ENCODE measurements at regions of chr7 and their contacts with region 1.

Region 1: DNA sequence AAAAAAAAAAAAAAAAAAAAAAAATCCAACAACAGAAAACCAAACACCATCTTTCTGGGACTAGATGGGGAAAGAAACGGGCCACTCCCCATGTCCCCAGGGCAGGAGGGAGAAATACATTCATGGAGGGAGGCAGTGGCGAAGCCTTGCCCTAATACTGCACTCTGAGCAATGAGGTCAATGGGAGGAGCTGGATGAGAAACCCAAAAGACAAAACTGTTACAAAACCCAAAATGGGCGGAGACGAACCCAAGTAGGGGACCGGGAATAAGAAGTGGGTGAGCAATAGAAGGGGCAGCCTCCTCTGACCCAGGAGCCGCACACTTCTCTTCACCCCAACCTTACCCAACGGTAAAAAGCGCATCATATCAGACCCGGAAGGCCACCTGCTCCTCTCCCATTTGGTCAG is 6.6 kb downstream of the GNB2 start:
- DNase-seq: no peak
- ATAC-seq: peak; percentile 2
- H3K4me3 ChIP-seq: no peak overlapping the region
- H3K27ac ChIP-seq: no peak overlapping the region
- H3K4me1 ChIP-seq: peaks cover 8% of the 10 kb centered on the region
- H3K27me3 ChIP-seq: no peaks in the 10 kb centered on the region
- CTCF ChIP-seq: no peak

Region 2: GRCh38 chr7:100478966-100479665 is 201.1 kb before region 1 on chr7 and contains the start of gene TSC22D4:
- intact Hi-C with region 1: loop called (anchors 10 kb)
- DNase-seq: peak; percentile 96
- ATAC-seq: peak; percentile 92
- H3K4me3 ChIP-seq: peak within 1 kb of the TSS; percentile 88
- H3K27ac ChIP-seq: peak within 1 kb of the TSS; percentile 90
- H3K4me1 ChIP-seq: peaks cover 33% of the 10 kb centered on the region
- H3K27me3 ChIP-seq: no peaks in the 10 kb centered on the region
- CTCF ChIP-seq: no peak
- total RNA-seq, gene TSC22D4: 51.8 TPM

Region 3: GRCh38 chr7:100545360-100546128 is 134.6 kb before region 1 on chr7:
- intact Hi-C with region 1: no loop called
- DNase-seq: no peak
- ATAC-seq: peak; percentile 75
- H3K4me3 ChIP-seq: no peak overlapping the region
- H3K27ac ChIP-seq: peak overlapping the region; percentile 77
- H3K4me1 ChIP-seq: peaks cover 54% of the 10 kb centered on the region
- H3K27me3 ChIP-seq: no peaks in the 10 kb centered on the region
- CTCF ChIP-seq: no peak

Region 4: DNA sequence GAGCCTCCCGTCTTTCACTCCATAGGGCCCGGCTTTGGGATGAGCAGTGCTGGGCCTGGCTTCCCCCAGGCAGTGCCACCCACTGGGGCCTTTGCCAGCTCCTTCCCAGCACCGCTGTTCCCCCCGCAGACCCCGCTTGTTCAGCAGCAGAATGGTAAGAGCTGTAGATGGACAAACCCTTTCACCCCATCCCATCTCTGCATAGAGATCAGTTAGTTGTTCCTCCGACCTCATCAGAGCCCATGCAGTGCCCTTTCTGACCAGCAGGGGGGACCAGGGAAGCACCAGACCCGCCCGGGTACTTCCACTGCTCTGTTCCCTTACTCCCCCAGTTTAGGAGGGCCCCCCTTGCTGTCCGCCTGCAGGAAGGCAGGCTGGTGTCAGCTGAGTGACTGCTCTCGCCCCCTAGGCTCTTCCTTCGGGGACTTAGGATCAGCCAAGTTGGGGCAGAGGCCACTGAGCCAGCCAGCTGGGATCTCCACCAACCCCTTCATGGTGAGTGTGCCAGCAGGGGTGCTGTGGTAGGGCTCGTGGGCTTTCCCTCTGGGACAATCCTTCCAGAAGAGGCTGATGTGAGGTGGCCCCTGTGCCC is 116.3 kb before region 1 on chr7:
- intact Hi-C with region 1: loop called (anchors 10 kb)
- DNase-seq: peak; percentile 90
- ATAC-seq: peak; percentile 84
- H3K4me3 ChIP-seq: no peak overlapping the region
- H3K27ac ChIP-seq: no peak overlapping the region
- H3K4me1 ChIP-seq: peaks cover 4% of the 10 kb centered on the region
- H3K27me3 ChIP-seq: no peaks in the 10 kb centered on the region
- CTCF ChIP-seq: peak; percentile 98

Region 5: DNA sequence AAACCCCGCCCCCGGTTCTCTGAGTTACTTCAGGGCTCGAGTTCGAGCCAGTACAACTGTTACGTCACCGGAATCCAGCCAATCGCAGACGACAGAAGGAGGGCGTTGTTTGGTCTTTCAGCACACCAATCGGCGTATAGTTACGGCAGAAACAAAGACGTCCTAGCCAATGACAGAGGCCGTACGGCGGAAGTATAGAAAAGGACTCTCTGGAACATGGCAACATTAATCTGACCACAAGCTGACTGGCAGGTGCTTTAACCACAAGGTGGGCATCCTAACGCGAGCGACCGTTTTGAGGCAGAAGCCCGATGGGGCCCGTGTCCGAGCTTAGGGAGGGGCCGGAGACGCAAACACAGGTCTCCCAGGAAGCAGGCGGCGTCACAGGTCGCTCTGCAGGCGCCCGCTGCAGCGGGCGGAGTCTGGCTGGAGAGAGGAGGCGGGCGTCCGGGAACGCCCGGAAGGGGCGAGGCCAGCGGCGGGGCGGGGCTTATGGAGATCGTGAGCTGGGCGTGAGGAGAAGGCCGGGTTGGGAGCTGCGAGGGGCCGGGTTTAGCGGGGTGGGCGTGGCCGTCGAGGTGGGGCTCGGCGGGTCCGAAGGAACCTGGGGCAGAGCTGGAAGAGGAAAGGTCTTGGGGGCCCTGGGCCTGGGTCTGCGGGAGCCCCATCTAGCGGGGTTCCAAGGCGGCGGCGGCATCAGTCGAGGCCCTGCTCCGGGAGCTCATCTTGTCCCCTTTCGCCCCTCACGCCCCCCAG is 68.0 kb before region 1 on chr7 and contains the start of gene MOSPD3:
- intact Hi-C with region 1: loop called (anchors 10 kb)
- DNase-seq: peak; percentile 99
- ATAC-seq: peak; percentile 98
- H3K4me3 ChIP-seq: peak within 1 kb of the TSS; percentile 78
- H3K27ac ChIP-seq: peak within 1 kb of the TSS; percentile 95
- H3K4me1 ChIP-seq: peaks cover 13% of the 10 kb centered on the region
- H3K27me3 ChIP-seq: no peaks in the 10 kb centered on the region
- CTCF ChIP-seq: no peak
- total RNA-seq, gene MOSPD3: 14.7 TPM

Region 6: DNA sequence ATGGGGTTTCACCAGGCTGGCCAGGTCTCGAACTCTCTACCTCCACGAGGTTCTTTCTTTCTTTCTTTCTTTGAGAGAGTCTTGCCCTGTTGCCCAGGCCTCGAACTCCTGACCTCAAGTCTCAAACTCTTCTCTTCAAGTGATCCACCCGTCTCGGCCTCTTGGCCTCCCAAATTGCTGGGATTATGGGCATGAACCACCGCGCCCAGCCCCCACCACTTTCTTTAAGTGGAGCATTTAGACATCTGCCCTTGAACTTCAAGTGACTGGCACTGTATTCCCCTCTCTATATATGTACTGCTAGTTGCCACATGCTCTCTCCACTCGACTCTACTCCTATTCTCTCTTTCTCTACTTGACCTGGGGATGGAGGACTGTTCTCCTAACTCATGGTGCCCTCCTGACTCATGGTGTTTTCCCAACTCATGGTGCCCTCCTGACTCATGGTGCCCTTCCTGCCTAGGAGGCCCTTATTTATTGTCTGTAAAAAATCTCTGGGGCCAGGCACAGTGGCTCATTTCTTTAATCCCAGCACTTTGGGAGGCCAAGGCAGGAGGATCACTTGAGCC is 234.8 kb after region 1 on chr7:
- intact Hi-C with region 1: no loop called
- DNase-seq: no peak
- ATAC-seq: peak; percentile 61
- H3K4me3 ChIP-seq: no peak overlapping the region
- H3K27ac ChIP-seq: no peak overlapping the region
- H3K4me1 ChIP-seq: peaks cover 4% of the 10 kb centered on the region
- H3K27me3 ChIP-seq: no peaks in the 10 kb centered on the region
- CTCF ChIP-seq: no peak

Measured in upper lobe of right lung (tissue), 1 donor.